ENCODE measurements at regions of chr11 and their contacts with region 1.

Region 1: DNA sequence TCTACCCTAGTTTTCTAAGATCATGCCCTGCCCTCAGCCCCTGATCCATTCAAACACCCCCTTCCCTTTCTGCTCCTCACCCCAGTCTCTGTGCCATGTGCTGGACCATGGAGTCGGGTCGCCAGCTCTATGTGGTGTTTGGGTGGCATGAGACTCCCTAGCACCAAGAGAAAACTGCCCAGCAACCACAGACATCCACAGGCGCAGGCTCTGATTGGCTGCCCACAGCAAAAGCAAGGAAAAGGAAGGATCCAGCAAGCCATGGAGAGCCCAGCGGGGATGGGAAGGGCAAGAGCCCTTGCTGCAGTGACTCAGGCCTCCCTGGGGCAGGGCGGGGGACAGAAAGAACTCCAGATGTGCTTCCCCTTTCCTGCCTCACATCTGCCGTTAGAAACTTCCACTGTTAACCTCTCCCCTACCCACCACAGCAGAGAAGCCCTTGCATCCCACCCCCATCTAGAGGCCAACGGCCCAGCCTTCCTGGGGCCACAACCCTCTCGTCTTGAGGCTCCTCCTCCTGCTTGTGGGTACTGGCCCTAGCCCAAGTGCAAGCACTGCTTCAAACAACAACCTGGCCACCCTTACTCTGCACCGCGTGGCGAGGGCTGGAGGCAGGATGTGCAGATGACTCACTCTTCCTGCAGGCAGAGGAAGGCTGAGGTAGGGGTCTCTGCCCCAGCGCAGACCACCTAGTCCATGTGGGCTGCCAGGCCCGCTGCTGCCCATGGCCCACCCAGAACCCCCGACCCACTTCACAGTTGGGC is 9.7 kb upstream of the AHNAK start:
- DNase-seq: peak; percentile 96
- H3K4me3 Mint-ChIP-seq: peak overlapping the region; percentile 78
- H3K27ac Mint-ChIP-seq: peak overlapping the region; percentile 98
- H3K4me1 Mint-ChIP-seq: peaks cover 86% of the 10 kb centered on the region
- H3K27me3 Mint-ChIP-seq: peaks cover 2% of the 10 kb centered on the region

Region 2: DNA sequence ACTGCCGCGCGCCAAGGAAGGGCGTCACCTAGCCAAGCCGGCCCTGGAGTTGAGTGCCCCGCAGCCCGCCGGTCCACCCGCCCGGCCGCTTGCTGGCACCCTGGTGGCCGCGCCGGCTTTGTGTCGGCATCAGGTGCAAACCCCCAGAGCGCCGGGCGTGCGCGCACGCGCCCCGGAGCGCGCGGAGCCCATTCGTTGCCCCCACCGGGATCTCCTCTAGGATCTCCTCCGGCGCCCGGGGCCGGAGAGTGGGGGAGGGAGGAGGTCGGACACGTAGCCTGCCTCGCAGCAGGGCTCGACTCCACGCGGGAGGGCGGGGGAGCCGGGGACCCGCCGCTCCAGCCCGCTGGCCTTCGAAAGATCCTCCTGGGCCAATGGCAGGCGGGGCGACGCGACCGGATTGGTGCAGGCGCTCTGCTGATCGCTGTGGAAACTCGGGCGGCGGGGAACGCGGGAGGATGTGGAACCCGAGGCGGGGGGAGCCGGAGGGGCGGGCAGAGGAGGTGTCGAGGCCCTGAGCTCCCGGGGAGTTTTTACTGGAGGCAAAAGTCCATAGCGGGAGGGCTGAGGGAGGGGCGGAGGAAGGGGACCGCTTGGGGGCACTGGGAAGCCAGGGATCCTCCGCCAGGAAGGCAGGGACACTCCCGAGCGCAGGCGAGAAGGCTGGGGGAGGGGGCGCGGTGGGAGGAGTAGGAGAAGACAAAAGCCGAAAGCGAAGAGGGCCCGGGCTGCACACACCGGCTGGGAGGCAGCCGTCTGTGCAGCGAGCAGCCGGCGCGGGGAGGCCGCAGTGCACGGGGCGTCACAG is 728.5 kb before region 1 on chr11 and contains the start of gene FADS2:
- intact Hi-C with region 1: loop called (anchors 10 kb)
- DNase-seq: peak; percentile 98
- H3K4me3 Mint-ChIP-seq: peak within 1 kb of the TSS; percentile 92
- H3K27ac Mint-ChIP-seq: peak within 1 kb of the TSS; percentile 95
- H3K4me1 Mint-ChIP-seq: peaks cover 44% of the 10 kb centered on the region
- H3K27me3 Mint-ChIP-seq: no peaks in the 10 kb centered on the region
- total RNA-seq, gene FADS2: 278 and 283 TPM in 2 replicates

Region 3: GRCh38 chr11:62416596-62416995 is 139.7 kb before region 1 on chr11:
- intact Hi-C with region 1: no loop called
- DNase-seq: no peak
- H3K4me3 Mint-ChIP-seq: no peak overlapping the region
- H3K27ac Mint-ChIP-seq: no peak overlapping the region
- H3K4me1 Mint-ChIP-seq: no peaks in the 10 kb centered on the region
- H3K27me3 Mint-ChIP-seq: no peaks in the 10 kb centered on the region

Region 4: DNA sequence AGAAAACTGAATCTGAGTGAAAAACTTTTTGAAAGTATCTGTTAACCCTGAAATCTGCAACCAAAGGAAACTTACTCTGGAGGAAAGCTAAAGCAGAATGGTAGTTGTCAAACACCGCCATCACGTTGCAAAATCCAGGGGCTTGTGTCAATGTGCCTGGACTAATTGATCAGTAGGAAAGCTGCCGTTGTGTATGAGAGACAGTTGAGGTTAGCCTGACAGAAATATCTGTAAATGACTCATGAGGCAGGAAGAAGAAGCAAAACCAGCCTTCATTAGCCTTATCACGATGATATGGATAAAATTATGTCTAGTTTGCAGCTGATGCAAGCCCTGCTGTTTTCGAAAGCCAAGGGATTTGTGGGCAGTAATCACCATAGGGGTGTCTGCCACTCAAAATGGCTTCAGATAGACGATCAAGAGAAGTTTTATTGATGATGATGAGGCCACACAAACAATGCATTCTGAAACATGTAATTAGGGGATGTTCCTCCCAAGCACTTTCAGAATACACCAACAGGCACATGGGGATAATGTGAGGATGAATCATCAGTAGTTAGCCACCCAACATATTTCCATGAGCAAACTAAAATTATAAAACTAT is 128.6 kb before region 1 on chr11:
- intact Hi-C with region 1: loop called (anchors 1 kb)
- DNase-seq: peak; percentile 74
- H3K4me3 Mint-ChIP-seq: peak overlapping the region; percentile 56
- H3K27ac Mint-ChIP-seq: peak overlapping the region; percentile 95
- H3K4me1 Mint-ChIP-seq: peaks cover 48% of the 10 kb centered on the region
- H3K27me3 Mint-ChIP-seq: peaks cover 5% of the 10 kb centered on the region

Region 5: DNA sequence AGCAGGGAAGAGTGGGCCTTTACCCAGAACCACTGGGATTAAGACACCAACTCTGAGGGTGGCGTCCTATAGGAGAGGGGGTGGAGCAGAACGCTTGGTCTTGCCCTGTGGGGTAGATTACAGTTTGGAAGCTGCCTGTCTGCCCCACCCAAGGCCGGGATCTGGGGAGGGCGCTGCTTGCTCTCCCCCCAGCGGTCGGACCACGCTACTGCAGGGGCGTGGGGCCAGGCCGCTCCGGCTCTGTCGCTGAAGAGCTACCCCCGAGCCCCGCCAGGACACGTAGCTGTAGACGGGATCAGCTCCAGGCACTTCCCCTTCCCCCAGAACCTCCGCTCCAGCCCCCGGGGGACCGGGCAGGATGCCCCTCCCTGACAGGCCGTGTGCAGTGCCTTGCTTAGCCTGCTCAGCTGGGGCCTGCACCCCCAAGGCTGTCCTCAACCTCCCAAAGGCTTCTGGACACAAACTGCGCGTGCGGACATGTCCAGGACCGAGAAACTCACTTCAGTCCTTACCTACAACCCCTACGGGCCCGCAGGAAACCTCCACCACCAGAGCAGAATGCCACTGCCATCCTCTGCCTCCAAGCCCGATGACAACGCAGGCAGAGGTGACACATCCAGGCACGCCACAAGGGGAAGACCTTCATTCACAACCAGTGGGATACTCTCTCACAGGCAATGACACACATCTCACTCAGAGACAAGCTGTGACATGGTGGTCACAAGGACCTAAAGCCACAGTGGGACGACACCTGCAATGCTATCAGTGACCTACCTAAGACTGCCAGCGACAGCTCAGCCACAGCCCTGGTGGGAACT is 13.3 kb before region 1 on chr11:
- intact Hi-C with region 1: loop called (anchors 1 kb)
- DNase-seq: peak; percentile 94
- H3K4me3 Mint-ChIP-seq: peak overlapping the region; percentile 99
- H3K27ac Mint-ChIP-seq: peak overlapping the region; percentile 95
- H3K4me1 Mint-ChIP-seq: peaks cover 68% of the 10 kb centered on the region
- H3K27me3 Mint-ChIP-seq: peaks cover 5% of the 10 kb centered on the region

Region 6: GRCh38 chr11:62573592-62574362 is 17.5 kb after region 1 on chr11 and contains the start of gene EEF1G:
- intact Hi-C with region 1: loop called (anchors 2 kb)
- DNase-seq: peak; percentile 99
- H3K4me3 Mint-ChIP-seq: peak within 1 kb of the TSS; percentile 96
- H3K27ac Mint-ChIP-seq: peak within 1 kb of the TSS; percentile 96
- H3K4me1 Mint-ChIP-seq: peaks cover 37% of the 10 kb centered on the region
- H3K27me3 Mint-ChIP-seq: no peaks in the 10 kb centered on the region
- total RNA-seq, gene EEF1G: 1,271 and 1,309 TPM in 2 replicates

Region 7: GRCh38 chr11:62601394-62602140 is 45.3 kb after region 1 on chr11 and contains the start of gene MTA2:
- intact Hi-C with region 1: loop called (anchors 2 kb)
- DNase-seq: peak; percentile 100
- H3K4me3 Mint-ChIP-seq: peak within 1 kb of the TSS; percentile 95
- H3K27ac Mint-ChIP-seq: peak within 1 kb of the TSS; percentile 88
- H3K4me1 Mint-ChIP-seq: peaks cover 44% of the 10 kb centered on the region
- H3K27me3 Mint-ChIP-seq: no peaks in the 10 kb centered on the region
- total RNA-seq, gene MTA2: 219 and 220 TPM in 2 replicates

Region 8: DNA sequence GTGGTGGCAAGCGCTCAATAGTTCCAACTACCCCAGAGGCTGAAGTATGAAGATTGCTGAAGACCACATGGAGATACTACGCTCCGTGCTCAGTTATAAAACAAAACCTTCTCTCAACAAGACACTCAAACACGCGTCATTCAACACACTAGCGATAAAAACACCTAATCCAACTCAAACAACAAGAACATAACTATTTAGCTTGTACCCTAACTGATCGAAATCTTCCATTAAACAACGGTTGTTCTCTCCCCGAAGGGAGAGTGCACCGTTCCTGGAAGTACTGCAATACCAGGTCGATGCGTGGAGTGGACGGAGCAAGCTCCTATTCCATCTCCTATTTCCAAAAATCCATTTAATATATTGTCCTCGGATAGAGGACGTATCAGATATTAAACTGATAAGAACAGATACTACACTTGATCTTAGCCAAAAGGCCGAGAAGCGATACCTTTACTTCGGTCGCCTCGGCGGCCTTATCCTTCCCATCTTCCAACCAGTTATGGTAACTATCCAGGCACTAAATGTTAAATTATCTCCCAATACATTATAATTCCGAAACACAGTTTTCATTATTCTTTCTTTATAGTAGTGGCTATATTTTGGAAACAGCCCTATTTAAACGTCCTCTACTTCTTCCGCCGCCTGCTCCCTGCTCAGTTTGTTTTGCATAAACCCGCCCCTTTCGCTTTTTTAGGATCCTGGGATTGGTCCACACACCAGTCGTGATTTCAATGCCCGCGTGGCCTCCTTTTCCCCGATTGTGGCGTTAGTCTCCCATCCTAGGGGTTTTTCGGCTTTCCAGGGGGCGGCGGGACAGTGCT is 285.3 kb after region 1 on chr11:
- intact Hi-C with region 1: loop called (anchors 5 kb)
- DNase-seq: peak; percentile 95
- H3K4me3 Mint-ChIP-seq: no peak overlapping the region
- H3K27ac Mint-ChIP-seq: no peak overlapping the region
- H3K4me1 Mint-ChIP-seq: peaks cover 26% of the 10 kb centered on the region
- H3K27me3 Mint-ChIP-seq: no peaks in the 10 kb centered on the region